ENCODE measurements at regions of chr15 and their contacts with region 1.

Region 1: GRCh38 chr15:77013776-77014131 is 18.8 kb downstream of the PSTPIP1 start:
- DNase-seq: peak; percentile 97
- ATAC-seq: peak; percentile 83
- H3K4me3 Mint-ChIP-seq: peak overlapping the region; percentile 70
- H3K27ac Mint-ChIP-seq: peak overlapping the region; percentile 99
- H3K4me1 Mint-ChIP-seq: peaks cover 98% of the 10 kb centered on the region
- H3K27me3 Mint-ChIP-seq: no peaks in the 10 kb centered on the region

Region 2: GRCh38 chr15:76987926-76988860 is 25.6 kb before region 1 on chr15:
- CTCF ChIA-PET with region 1: interaction called, 19 read pairs
- DNase-seq: peak; percentile 93
- ATAC-seq: peak; percentile 90
- H3K4me3 Mint-ChIP-seq: peak overlapping the region; percentile 49
- H3K27ac Mint-ChIP-seq: peak overlapping the region; percentile 100
- H3K4me1 Mint-ChIP-seq: peaks cover 60% of the 10 kb centered on the region
- H3K27me3 Mint-ChIP-seq: no peaks in the 10 kb centered on the region

Region 3: DNA sequence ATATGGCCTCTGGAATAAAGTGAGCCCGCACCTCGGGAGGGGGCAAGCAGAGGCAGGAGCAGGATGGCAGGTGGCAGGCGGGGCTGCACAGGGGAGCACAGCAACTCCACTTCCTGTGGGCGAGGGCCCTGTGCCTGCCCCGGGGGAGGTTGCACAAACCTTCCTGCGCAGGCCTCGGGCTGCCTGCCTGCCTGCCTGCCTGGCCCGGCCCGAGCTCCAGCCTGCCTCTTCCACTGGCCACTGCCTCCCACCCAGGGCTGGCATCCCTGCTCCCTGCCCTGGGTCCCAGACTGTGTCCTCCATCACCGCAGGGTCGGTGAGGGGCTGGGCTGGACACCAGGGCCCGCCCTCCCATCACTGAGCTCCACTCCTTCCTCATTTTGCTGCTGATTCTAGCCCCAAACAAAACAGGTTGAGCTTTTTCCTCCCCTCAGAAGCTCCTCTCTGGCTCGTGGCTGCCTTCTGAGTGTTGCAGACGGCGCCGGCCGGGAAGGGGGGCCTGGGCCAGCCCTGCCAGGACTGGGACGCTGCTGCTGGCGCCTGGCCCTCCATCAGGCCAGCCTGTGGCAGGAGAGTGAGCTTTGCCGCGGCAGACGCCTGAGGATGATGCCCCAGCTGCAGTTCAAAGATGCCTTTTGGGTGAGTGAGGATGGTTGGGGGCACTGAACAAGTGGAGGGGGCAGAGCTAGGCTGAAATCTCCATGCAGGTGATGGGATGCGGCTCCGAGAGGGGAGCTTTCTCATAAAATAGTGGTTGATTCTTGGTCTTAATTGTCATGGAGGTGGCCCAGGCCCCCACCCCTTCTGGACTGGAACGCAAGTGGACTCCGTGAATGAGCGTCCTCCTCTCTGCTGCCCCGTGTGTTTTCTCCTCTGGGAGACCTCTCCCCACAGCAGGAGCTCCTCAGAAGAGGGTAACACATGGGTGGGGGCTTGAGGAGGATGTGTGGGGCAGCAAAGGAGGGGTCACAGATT is 18.5 kb before region 1 on chr15 and contains the start of gene PSTPIP1:
- CTCF ChIA-PET with region 1: interaction called, 50 read pairs
- DNase-seq: peak; percentile 88
- ATAC-seq: peak; percentile 74
- H3K4me3 Mint-ChIP-seq: peak within 1 kb of the TSS; percentile 97
- H3K27ac Mint-ChIP-seq: peak within 1 kb of the TSS; percentile 98
- H3K4me1 Mint-ChIP-seq: peaks cover 65% of the 10 kb centered on the region
- H3K27me3 Mint-ChIP-seq: no peaks in the 10 kb centered on the region
- total RNA-seq, gene PSTPIP1: 157 to 255 TPM

Measured in activated CD8-positive, alpha-beta memory T cell treated with anti-CD3 and anti-CD28 coated beads, Interleukin-2, amount 10 ng/mL, durations not matched to agents 7 days and 5 days (primary cell).